IMR-90 (cell line): ENCODE measurements at regions of chr2 and their contacts with region 1.

Region 1: DNA sequence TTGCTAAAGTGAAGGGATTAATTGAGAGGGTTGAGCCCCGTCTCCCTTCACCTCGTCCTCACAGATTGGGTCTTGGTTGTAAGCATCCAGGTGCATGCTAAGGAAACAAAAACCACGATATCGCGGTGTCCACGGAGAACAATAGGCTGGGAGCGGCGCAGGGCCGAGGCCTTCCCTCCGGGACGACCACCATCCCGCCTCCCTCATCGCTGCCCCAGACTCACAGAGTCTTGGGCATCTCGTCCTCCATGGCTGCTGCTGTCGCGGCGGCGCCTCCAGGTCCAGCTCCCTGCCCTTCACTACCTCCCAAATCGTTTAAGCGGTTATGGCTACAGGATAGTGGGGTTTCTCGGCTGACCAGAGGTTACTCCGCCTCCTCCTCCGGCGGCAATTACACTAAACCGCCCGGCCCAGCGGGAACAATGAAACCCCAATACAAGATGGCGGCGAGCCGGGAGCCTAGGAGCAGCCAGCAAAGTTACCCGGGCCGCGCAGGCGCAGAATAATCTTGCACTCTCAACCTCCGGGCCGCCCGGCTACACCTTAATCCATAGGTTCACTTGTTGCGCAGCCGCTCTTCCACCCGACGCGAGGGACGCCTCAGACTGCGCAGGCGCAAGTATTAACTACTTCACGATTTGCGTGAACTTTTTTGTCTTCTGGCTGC is at the start of gene TIA1:
- DNase-seq: peak; percentile 97
- ATAC-seq: peak; percentile 98
- H3K4me3 ChIP-seq: peak within 1 kb of the TSS; percentile 84
- H3K27ac ChIP-seq: peak within 1 kb of the TSS; percentile 96
- H3K4me1 ChIP-seq: peaks cover 2% of the 10 kb centered on the region; the same call in 1 of the 2 replicates
- H3K27me3 ChIP-seq: no peaks in the 10 kb centered on the region
- CTCF ChIP-seq: no peak
- POLR2A ChIP-seq: peak; percentile 95
- RAD21 ChIP-seq: no peak
- total RNA-seq, gene TIA1: 93.3 and 103 TPM in 2 replicates

Region 2: DNA sequence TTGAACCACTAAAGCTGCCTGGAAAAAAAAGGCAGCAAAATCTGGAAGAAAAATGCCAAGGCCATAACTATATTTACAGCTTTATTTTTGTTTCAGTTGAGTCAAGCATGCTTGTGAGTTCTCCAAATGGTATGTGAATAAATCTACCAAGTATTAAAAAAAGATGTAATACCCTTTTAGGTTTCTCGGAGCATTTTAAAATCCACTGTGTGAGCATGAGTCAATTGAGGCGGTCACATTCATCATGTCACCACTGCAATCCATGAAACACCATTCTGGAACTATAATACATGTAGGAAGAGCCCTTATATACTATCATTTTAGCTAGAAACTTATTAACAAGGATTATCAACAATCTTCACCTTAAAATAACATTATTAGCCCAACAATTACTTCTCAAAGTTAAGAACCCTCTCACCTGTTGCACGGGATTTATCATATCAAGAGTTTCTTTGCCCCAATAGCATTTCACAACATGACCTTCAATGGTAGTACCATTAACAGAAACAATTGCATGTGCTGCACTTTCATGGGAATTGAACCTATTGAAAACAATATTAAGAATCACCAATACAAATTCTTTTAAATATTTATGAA is 33.3 kb before region 1 on chr2:
- CTCF ChIA-PET with region 1: no interaction called
- POLR2A ChIA-PET with region 1: no interaction called
- dilution Hi-C with region 1: no loop called
- in situ Hi-C with region 1: no loop called
- intact Hi-C with region 1: loop called (anchors 2 kb)
- DNase-seq: peak; percentile 96
- ATAC-seq: peak; percentile 86
- H3K4me3 ChIP-seq: no peak overlapping the region
- H3K27ac ChIP-seq: no peak overlapping the region
- H3K4me1 ChIP-seq: peaks cover 6% of the 10 kb centered on the region
- H3K27me3 ChIP-seq: no peaks in the 10 kb centered on the region
- CTCF ChIP-seq: no peak
- POLR2A ChIP-seq: no peak
- RAD21 ChIP-seq: no peak

Region 3: DNA sequence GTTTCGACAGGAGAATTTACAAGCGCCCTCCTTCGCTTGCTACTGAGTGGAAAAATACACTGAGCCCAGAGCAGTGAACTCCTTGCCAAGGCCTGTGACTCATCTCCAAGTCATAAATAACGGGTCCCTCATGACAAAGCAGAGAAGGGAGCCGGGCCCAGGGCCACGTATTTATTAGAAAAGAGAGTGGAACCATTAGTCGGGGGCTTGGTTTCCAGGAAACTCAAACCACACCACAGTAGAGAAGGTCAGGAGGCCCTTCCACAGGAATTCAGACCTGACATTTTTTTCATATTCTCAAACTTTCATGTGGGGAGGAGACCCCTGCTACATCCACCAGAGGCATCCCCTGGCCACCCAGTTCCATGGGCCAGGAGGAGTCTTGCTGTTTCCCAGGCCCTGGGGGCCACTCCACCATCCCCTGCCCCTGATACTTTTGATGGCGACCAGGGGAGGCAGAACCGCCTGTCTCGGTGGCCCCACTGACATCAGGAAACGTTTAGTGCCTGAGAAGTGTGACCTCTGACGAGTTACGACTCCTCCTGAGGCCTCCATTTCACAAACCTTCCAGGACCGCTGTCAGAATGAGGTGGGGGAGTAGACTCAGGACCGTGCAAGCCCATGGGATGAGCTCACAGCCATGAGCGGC is 1494.8 kb after region 1 on chr2:
- CTCF ChIA-PET with region 1: no interaction called
- POLR2A ChIA-PET with region 1: no interaction called
- dilution Hi-C with region 1: no loop called
- in situ Hi-C with region 1: no loop called
- intact Hi-C with region 1: no loop called
- DNase-seq: peak; percentile 86
- ATAC-seq: peak; percentile 81
- H3K4me3 ChIP-seq: no peak overlapping the region
- H3K27ac ChIP-seq: peak overlapping the region; percentile 3; the same call in 1 of the 2 replicates
- H3K4me1 ChIP-seq: peaks cover 12% of the 10 kb centered on the region
- H3K27me3 ChIP-seq: peaks cover 6% of the 10 kb centered on the region
- CTCF ChIP-seq: no peak
- POLR2A ChIP-seq: no peak
- RAD21 ChIP-seq: no peak